ENCODE measurements at regions of chr10 and their contacts with region 1.

Region 1: DNA sequence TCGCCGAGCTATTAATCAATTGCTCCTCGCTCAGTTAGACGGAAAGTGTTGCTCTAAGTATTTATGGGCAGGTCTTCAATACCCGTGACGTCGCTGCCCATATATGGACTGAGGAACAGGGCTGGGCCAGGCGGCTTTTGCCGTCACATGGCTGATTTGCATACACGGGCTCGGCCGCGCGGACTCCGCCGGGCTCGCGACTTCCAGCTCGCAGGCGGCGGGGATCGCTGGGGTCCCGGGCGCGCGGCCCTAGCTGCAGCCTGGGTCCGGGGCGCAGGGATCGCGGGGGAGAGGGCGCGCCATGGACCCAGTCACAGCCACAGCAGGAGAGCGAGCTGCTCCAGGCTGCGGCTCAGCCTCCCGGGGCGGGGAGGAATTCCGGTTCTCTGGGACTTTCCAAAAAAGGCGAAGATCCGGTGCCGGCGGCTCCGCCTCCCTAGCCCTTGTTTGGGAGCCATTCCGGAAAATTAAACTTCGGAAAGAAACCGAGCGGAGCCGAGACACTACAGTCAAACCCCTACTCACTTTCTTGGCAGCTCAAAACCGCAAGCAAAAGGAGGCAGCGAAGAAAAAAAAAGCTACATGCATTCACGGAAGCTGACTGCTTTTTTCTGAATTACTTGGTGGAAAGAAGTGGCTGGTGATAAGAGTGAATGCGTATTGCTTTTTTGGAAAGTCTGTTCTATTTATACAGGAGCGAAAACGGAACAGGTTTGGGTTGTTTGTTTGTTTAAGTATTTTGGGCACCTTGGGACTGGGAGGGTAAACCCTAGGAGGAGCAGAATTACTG is at the start of gene EGR2:
- DNase-seq: peak; percentile 92 to 99 (median 98)
- ATAC-seq: peak; percentile 88
- H3K4me3 ChIP-seq: peak within 1 kb of the TSS; percentile 69
- H3K4me3 Mint-ChIP-seq: peak within 1 kb of the TSS; percentile 89 to 100 (median 98)
- H3K27ac ChIP-seq: peak within 1 kb of the TSS; percentile 76
- H3K27ac Mint-ChIP-seq: peak within 1 kb of the TSS; percentile 86 to 99 (median 95)
- H3K4me1 ChIP-seq: peaks cover 17 to 23% of the 10 kb centered on the region in 2 donors
- H3K4me1 Mint-ChIP-seq: peaks cover 36 to 62% (median 49%) of the 10 kb centered on the region in 7 donors
- H3K27me3 ChIP-seq: peaks cover 3 to 7% of the 10 kb centered on the region in 2 donors
- H3K27me3 Mint-ChIP-seq: peaks cover 26 to 74% (median 31%) of the 10 kb centered on the region in 5 donors
- total RNA-seq, gene EGR2: 0.46 to 14.2 (median 2.7) TPM

Region 2: DNA sequence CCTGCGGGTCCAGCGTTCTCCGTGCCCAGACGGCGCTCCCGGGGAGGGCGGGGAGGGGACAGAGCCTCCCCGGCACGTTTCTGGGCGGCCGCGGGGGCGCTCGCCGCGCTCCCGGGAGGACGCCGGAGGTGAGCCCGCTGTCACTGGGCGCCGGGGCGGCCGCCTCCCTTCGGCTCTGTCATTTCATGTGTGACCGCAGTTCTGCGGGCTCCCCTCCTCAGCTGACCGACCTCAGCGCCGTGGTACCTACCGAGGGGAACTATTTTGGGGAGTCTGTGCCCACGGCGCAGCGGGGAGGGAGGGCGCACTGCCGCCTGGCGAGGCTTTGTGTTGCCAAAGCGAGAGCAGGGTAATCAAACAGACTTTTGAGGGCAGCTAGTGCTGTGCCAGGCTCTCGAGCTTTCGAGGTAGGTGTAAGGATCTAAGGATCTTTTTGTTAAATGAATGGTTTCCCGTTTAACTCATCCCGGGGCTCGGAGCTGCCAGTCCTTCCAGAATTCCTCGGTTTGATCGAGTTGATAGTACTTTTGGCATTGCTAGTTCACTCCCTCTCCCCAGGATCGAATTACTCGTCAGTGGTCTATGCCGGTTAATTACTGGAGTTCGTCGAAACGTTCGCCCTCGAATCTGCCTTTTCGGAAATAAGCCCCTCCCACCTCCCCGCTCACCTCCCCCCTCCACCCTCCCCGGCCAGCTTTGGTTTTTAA is 913.2 kb before region 1 on chr10:
- CTCF ChIA-PET with region 1: no interaction called
- POLR2A ChIA-PET with region 1: no interaction called
- intact Hi-C with region 1: loop called (anchors 1 kb)
- DNase-seq: peak; percentile 56 to 78 (median 69)
- ATAC-seq: peak; percentile 58
- H3K4me3 ChIP-seq: peak overlapping the region; percentile 96
- H3K4me3 Mint-ChIP-seq: peak overlapping the region; percentile 81 to 100 (median 94)
- H3K27ac ChIP-seq: peak overlapping the region; percentile 92
- H3K27ac Mint-ChIP-seq: peak overlapping the region; percentile 93 to 100 (median 97)
- H3K4me1 ChIP-seq: peaks cover 18 to 25% of the 10 kb centered on the region in 2 donors
- H3K4me1 Mint-ChIP-seq: peaks cover 14 to 59% (median 49%) of the 10 kb centered on the region in 7 donors
- H3K27me3 ChIP-seq: no peaks in the 10 kb centered on the region
- H3K27me3 Mint-ChIP-seq: peaks cover 0 to 2% (median 0%) of the 10 kb centered on the region in 5 donors

Region 3: GRCh38 chr10:62437696-62438095 is 378.8 kb before region 1 on chr10:
- CTCF ChIA-PET with region 1: interaction called, 9 read pairs
- POLR2A ChIA-PET with region 1: interaction called, 4 read pairs
- intact Hi-C with region 1: loop called (anchors 1 kb)
- DNase-seq: peak in 7 of 9 donors; percentile 42 to 71 (median 65)
- ATAC-seq: peak; percentile 79
- H3K4me3 ChIP-seq: no peak overlapping the region
- H3K4me3 Mint-ChIP-seq: no peak overlapping the region
- H3K27ac ChIP-seq: no peak overlapping the region
- H3K27ac Mint-ChIP-seq: no peak overlapping the region
- H3K4me1 ChIP-seq: no peaks in the 10 kb centered on the region
- H3K4me1 Mint-ChIP-seq: peaks cover 0 to 12% (median 3%) of the 10 kb centered on the region in 7 donors
- H3K27me3 ChIP-seq: no peaks in the 10 kb centered on the region
- H3K27me3 Mint-ChIP-seq: peaks cover 0 to 24% (median 4%) of the 10 kb centered on the region in 5 donors

Region 4: GRCh38 chr10:62610649-62611229 is 205.8 kb before region 1 on chr10:
- CTCF ChIA-PET with region 1: interaction called, 42 read pairs
- POLR2A ChIA-PET with region 1: interaction called, 3 read pairs
- intact Hi-C with region 1: loop called (anchors 1 kb)
- DNase-seq: peak; percentile 48 to 81 (median 74)
- ATAC-seq: peak; percentile 93
- H3K4me3 ChIP-seq: no peak overlapping the region
- H3K4me3 Mint-ChIP-seq: no peak overlapping the region
- H3K27ac ChIP-seq: no peak overlapping the region
- H3K27ac Mint-ChIP-seq: peak overlapping the region in 1 of 9 donors; percentile 50
- H3K4me1 ChIP-seq: no peaks in the 10 kb centered on the region
- H3K4me1 Mint-ChIP-seq: peaks cover 0 to 36% (median 0%) of the 10 kb centered on the region in 7 donors
- H3K27me3 ChIP-seq: no peaks in the 10 kb centered on the region
- H3K27me3 Mint-ChIP-seq: peaks cover 0 to 14% (median 4%) of the 10 kb centered on the region in 5 donors

Region 5: GRCh38 chr10:62625484-62625883 is 191.0 kb before region 1 on chr10:
- CTCF ChIA-PET with region 1: no interaction called
- POLR2A ChIA-PET with region 1: no interaction called
- intact Hi-C with region 1: no loop called
- DNase-seq: no peak
- ATAC-seq: no peak
- H3K4me3 ChIP-seq: no peak overlapping the region
- H3K4me3 Mint-ChIP-seq: no peak overlapping the region
- H3K27ac ChIP-seq: no peak overlapping the region
- H3K27ac Mint-ChIP-seq: no peak overlapping the region
- H3K4me1 ChIP-seq: no peaks in the 10 kb centered on the region
- H3K4me1 Mint-ChIP-seq: peaks cover 0 to 10% (median under 1%) of the 10 kb centered on the region in 7 donors
- H3K27me3 ChIP-seq: no peaks in the 10 kb centered on the region
- H3K27me3 Mint-ChIP-seq: peaks cover 0 to 9% (median 0%) of the 10 kb centered on the region in 5 donors

Region 6: GRCh38 chr10:62732841-62733653 is 83.5 kb before region 1 on chr10:
- CTCF ChIA-PET with region 1: interaction called, 5 read pairs
- POLR2A ChIA-PET with region 1: interaction called, 5 read pairs
- intact Hi-C with region 1: loop called (anchors 1 kb)
- DNase-seq: peak in 8 of 9 donors; percentile 54 to 83 (median 76)
- ATAC-seq: peak; percentile 92
- H3K4me3 ChIP-seq: no peak overlapping the region
- H3K4me3 Mint-ChIP-seq: peak overlapping the region in 7 of 10 donors; percentile 14 to 72 (median 65)
- H3K27ac ChIP-seq: peak overlapping the region; percentile 22
- H3K27ac Mint-ChIP-seq: peak overlapping the region in 2 of 9 donors; percentile 78 to 85
- H3K4me1 ChIP-seq: peaks cover 24 to 49% of the 10 kb centered on the region in 2 donors
- H3K4me1 Mint-ChIP-seq: peaks cover 0 to 17% (median 0%) of the 10 kb centered on the region in 7 donors
- H3K27me3 ChIP-seq: no peaks in the 10 kb centered on the region
- H3K27me3 Mint-ChIP-seq: peaks cover 0 to 14% (median 0%) of the 10 kb centered on the region in 5 donors

Region 7: GRCh38 chr10:62858364-62858763 is 41.8 kb after region 1 on chr10:
- CTCF ChIA-PET with region 1: no interaction called
- POLR2A ChIA-PET with region 1: no interaction called
- intact Hi-C with region 1: loop called in 1 of 2 experiments (anchors 1 kb)
- DNase-seq: no peak
- ATAC-seq: no peak
- H3K4me3 ChIP-seq: no peak overlapping the region
- H3K4me3 Mint-ChIP-seq: no peak overlapping the region
- H3K27ac ChIP-seq: no peak overlapping the region
- H3K27ac Mint-ChIP-seq: no peak overlapping the region
- H3K4me1 ChIP-seq: peaks cover 0 to 38% of the 10 kb centered on the region in 2 donors
- H3K4me1 Mint-ChIP-seq: peaks cover 13 to 54% (median 24%) of the 10 kb centered on the region in 7 donors
- H3K27me3 ChIP-seq: no peaks in the 10 kb centered on the region
- H3K27me3 Mint-ChIP-seq: peaks cover 0 to 18% (median 13%) of the 10 kb centered on the region in 5 donors

Region 8: GRCh38 chr10:63521416-63522276 is 705.1 kb after region 1 on chr10:
- CTCF ChIA-PET with region 1: no interaction called
- POLR2A ChIA-PET with region 1: no interaction called
- intact Hi-C with region 1: loop called (anchors 1 to 2 kb)
- DNase-seq: peak; percentile 45 to 70 (median 61)
- ATAC-seq: peak; percentile 78
- H3K4me3 ChIP-seq: peak overlapping the region; percentile 83
- H3K4me3 Mint-ChIP-seq: peak overlapping the region; percentile 72 to 92 (median 88)
- H3K27ac ChIP-seq: peak overlapping the region; percentile 86
- H3K27ac Mint-ChIP-seq: peak overlapping the region; percentile 81 to 95 (median 86)
- H3K4me1 ChIP-seq: peaks cover 4 to 30% of the 10 kb centered on the region in 2 donors
- H3K4me1 Mint-ChIP-seq: peaks cover 36 to 80% (median 67%) of the 10 kb centered on the region in 7 donors
- H3K27me3 ChIP-seq: no peaks in the 10 kb centered on the region
- H3K27me3 Mint-ChIP-seq: no peaks in the 10 kb centered on the region